ENCODE measurements at regions of chr10 and their contacts with region 1.

Region 1: DNA sequence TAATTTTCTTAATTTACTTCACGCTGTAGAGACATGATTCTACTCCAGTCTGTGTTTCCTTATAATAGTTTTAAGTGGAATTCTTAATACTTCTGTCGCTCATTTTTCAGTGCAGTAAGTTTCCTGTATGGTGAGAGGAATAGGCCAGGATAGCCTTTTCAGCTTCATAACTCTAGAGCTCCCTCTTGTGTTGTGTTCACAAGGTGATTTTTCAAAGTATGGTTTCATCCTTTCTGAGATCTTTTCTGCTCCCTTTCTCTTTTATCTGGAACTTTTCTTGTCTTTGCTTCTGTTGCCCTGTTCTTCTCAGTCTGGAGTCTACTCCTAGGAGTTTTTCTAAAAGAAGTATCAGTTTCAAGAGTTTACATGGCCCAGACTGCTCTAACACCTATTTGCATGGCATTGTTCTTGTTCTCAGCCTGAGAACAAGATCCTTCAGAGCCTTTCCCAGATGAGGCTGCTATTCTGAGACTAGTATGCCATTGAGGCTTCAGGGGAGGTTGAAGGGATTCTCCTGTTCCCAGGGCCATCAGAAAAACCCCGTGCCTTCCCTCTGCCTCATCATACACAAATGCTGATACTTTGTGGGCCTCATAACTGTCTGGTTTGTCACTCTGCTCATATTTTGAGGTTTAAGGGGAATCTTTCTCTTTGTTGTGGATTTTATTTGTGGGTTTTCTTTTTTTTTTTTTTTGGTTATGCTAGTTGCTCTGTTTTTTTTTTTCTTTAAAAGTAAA is 21.8 kb downstream of the NET1 start:
- DNase-seq: no peak
- H3K4me3 Mint-ChIP-seq: no peak overlapping the region
- H3K27ac Mint-ChIP-seq: no peak overlapping the region
- H3K4me1 Mint-ChIP-seq: peaks cover 14% of the 10 kb centered on the region
- H3K27me3 Mint-ChIP-seq: no peaks in the 10 kb centered on the region

Region 2: GRCh38 chr10:5391790-5392189 is 42.4 kb before region 1 on chr10:
- CTCF ChIA-PET with region 1: no interaction called
- POLR2A ChIA-PET with region 1: no interaction called
- DNase-seq: no peak
- H3K4me3 Mint-ChIP-seq: no peak overlapping the region
- H3K27ac Mint-ChIP-seq: no peak overlapping the region
- H3K4me1 Mint-ChIP-seq: no peaks in the 10 kb centered on the region
- H3K27me3 Mint-ChIP-seq: peaks cover 11% of the 10 kb centered on the region

Region 3: DNA sequence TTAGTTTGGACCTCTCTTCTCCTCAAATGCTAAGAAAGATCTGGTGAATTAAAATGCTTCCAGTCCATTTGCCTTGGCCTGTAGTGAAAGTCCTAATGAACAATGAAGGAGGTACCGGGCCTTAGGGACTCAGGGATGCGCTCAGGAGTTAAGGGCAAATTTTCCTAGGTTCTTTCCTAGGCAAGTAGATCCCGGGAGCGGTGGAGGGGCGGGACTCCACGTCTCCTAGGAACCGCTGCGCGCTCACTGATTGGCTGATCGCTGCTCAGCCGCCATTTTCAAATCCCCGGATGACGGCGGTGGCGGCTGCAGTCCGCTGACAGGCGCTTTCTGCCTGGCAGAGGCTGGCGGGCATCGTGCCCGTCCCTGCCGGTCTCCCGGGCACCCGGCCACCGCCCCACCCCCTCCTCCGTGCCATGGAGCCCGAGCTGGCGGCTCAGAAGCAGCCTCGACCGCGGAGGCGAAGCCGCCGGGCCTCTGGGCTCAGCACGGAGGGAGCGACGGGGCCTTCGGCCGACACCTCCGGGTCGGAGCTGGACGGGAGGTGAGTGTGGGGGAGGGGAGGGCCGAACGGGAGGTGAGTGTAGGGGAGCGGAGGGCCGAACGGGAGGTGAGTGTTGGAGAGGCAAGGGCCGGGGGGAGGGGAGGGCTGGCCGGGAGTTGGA is 21.8 kb before region 1 on chr10 and contains the start of gene NET1:
- CTCF ChIA-PET with region 1: interaction called, 4 read pairs
- POLR2A ChIA-PET with region 1: interaction called, 10 read pairs
- DNase-seq: peak; percentile 81
- H3K4me3 Mint-ChIP-seq: no peak within 1 kb of the TSS
- H3K27ac Mint-ChIP-seq: peak within 1 kb of the TSS; percentile 27
- H3K4me1 Mint-ChIP-seq: peaks cover 9% of the 10 kb centered on the region
- H3K27me3 Mint-ChIP-seq: peaks cover 25% of the 10 kb centered on the region
- total RNA-seq, gene NET1: 37.1 to 40.0 TPM

Region 4: GRCh38 chr10:5461914-5462840 is 28.0 kb after region 1 on chr10:
- CTCF ChIA-PET with region 1: no interaction called
- POLR2A ChIA-PET with region 1: no interaction called
- DNase-seq: no peak
- H3K4me3 Mint-ChIP-seq: no peak overlapping the region
- H3K27ac Mint-ChIP-seq: no peak overlapping the region
- H3K4me1 Mint-ChIP-seq: peaks cover 3% of the 10 kb centered on the region
- H3K27me3 Mint-ChIP-seq: no peaks in the 10 kb centered on the region

Region 5: DNA sequence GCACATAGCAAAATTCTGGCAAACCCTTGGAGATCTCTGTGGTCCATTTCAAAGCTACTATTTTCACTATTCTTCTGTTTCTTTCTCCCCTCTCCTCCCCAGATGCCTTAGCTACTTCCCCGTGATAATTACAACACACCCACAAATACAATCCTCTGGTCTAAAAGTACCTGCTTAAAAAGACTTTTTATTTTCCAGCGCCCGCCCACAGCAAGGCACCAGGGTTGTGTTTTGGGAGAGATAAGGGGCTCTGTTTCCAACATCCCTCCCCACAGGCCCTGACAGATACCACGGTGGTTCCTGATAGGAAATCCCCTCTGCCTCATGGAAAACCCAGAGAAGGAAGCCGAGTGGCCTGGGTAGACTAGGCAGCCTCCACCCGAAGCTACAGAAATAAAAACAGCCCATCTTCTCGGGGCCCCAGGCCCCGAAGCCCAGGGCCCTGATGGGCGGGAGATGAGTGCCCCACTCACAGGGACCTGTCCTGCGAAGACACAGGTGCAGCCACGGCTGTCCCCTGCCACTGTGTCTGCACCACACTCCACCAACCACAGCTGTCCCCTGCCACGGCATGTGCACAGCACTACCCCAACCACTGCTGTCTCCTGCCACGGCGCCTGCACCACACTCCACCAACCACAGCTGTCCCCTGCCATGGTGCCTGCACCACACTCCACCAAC is 45.4 kb after region 1 on chr10:
- CTCF ChIA-PET with region 1: no interaction called
- POLR2A ChIA-PET with region 1: no interaction called
- DNase-seq: no peak
- H3K4me3 Mint-ChIP-seq: no peak overlapping the region
- H3K27ac Mint-ChIP-seq: no peak overlapping the region
- H3K4me1 Mint-ChIP-seq: no peaks in the 10 kb centered on the region
- H3K27me3 Mint-ChIP-seq: peaks cover 3% of the 10 kb centered on the region

Measured in activated CD4-positive, alpha-beta memory T cell treated with anti-CD3 and anti-CD28 coated beads, Interleukin-2, amount 10 ng/mL, durations not matched to agents 7 days and 5 days (primary cell).